ENCODE measurements at regions of chr14 and their contacts with region 1.

Region 1: GRCh38 chr14:68103853-68104252 is 284.3 kb downstream of the RAD51B start:
- DNase-seq: no peak
- H3K4me3 ChIP-seq: no peak overlapping the region
- CTCF ChIP-seq: no peak
- POLR2A ChIP-seq: no peak

Region 2: DNA sequence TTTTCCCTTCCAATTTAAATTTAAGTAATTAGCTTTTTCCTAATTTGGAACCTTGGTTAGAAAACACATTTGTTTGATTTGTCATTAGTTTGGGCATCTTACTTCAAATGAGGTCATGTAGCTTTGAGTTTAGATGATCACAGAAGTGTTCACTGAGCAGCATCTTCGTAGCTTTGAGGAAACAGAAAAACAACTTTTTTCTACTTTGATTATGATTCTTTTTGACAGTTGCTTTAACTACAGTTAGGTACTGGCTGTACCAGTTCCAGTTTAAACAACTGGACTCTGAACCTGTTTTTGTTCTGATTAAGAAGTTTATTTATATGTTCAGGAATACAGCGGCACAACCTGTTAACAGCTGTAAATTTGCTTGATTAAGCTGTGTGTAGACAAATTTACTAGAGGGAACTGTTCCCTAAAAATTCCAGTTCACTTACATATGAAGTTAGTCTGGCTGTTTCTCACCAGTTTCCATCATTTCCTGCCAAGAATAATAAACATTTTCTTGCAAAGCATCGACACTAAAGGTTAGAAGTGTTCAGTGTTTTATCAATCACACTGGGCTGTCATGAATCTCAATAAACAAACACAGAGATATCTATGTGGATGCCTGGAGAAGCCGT is 92.3 kb before region 1 on chr14:
- intact Hi-C with region 1: no loop called
- DNase-seq: no peak
- H3K4me3 ChIP-seq: no peak overlapping the region
- CTCF ChIP-seq: no peak
- POLR2A ChIP-seq: no peak

Region 3: DNA sequence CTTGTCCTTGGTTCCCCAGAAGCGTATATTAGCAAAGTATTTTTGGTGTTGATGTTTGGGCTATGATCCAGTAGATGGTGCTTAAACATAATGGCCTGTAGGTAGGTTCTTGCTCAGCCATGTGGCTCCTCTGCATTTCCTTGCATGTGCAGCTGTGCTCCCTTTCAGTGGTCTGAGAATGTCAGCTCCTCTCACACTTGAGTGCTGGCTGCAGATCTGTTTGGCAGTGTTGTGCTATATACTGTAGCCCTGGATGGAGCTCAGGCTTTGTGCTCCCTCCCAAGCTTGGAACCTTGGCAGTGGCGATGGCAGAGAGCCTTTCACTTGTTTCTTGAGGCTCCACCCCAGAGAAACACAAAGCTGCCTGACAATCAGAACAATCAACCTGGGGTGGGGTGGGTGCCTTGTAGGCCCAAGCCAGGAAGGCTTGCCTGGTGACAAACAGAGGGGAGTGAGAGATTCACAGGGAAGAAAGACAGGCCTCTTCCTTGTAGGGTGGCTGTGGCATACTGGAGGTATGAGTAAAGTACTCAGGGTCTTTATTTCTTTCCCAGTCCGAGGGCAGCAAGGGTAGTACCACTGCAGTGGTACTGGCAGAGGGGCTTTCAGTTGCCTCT is 29.0 kb before region 1 on chr14:
- intact Hi-C with region 1: loop called (anchors 1 kb)
- DNase-seq: no peak
- H3K4me3 ChIP-seq: no peak overlapping the region
- CTCF ChIP-seq: no peak
- POLR2A ChIP-seq: no peak

Measured in lower leg skin (tissue), 4 donors.